Panc1 (cell line): ENCODE measurements at regions of chr15 and their contacts with region 1.

Region 1: DNA sequence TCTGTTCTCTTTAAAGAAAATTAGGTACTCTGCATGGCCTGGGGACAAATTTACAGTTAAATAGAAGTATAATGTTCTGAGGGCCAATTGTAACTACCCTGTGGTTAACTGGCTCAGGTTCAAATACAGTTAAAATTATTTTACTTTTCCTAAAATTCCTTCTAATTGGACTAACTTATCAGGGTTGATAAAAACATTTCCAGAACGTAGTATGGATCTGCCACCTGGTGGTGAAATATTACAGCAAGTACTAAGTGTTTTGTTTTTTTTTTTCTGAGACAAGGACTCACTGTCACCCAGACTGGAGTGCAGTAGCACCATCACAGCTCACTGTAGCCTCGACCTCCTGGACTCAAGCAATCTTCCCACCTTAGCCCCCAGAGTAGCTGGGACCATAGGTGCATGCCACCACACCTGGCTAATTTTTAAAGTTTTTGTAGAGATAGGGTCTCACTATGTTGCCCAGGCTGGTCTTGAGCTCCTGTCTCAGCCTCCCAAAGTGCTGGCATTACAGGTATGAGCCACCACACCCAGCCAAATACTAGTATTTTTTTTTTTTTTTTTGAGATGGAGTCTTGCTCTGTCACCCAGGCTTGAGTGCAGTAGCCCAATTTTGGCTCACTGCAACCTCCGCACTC is 29.2 kb downstream of the NEO1 start:
- DNase-seq: peak; percentile 47
- ATAC-seq: peak; percentile 73
- H3K4me3 ChIP-seq: no peak overlapping the region
- H3K27ac ChIP-seq: no peak overlapping the region
- H3K4me1 ChIP-seq: no peaks in the 10 kb centered on the region
- H3K27me3 ChIP-seq: peaks cover 2% of the 10 kb centered on the region; the same call in 1 of the 2 replicates
- CTCF ChIP-seq: peak; percentile 72

Region 2: GRCh38 chr15:72722071-72722696 is 359.3 kb before region 1 on chr15:
- CTCF ChIA-PET with region 1: no interaction called
- POLR2A ChIA-PET with region 1: no interaction called
- in situ Hi-C with region 1: no loop called
- intact Hi-C with region 1: loop called (anchors 5 kb)
- DNase-seq: peak; percentile 38
- ATAC-seq: peak; percentile 88
- H3K4me3 ChIP-seq: no peak overlapping the region
- H3K27ac ChIP-seq: no peak overlapping the region
- H3K4me1 ChIP-seq: no peaks in the 10 kb centered on the region
- H3K27me3 ChIP-seq: no peaks in the 10 kb centered on the region
- CTCF ChIP-seq: peak; percentile 89

Region 3: GRCh38 chr15:72796515-72797337 is 284.7 kb before region 1 on chr15:
- CTCF ChIA-PET with region 1: no interaction called
- POLR2A ChIA-PET with region 1: interaction called, 3 read pairs
- in situ Hi-C with region 1: no loop called
- intact Hi-C with region 1: loop called (anchors 1 kb)
- DNase-seq: no peak
- ATAC-seq: peak; percentile 94
- H3K4me3 ChIP-seq: peak overlapping the region; percentile 42 to 56
- H3K27ac ChIP-seq: no peak overlapping the region
- H3K4me1 ChIP-seq: 0 out of 2 replicates have a peak, but pooled peaks cover 3% of the 10 kb centered on the region
- H3K27me3 ChIP-seq: peaks cover 2% of the 10 kb centered on the region; the same call in 1 of the 2 replicates
- CTCF ChIP-seq: peak; percentile 93